Endothelial cell of umbilical vein (primary cell): ENCODE measurements at regions of chr14 and their contacts with region 1.

Region 1: DNA sequence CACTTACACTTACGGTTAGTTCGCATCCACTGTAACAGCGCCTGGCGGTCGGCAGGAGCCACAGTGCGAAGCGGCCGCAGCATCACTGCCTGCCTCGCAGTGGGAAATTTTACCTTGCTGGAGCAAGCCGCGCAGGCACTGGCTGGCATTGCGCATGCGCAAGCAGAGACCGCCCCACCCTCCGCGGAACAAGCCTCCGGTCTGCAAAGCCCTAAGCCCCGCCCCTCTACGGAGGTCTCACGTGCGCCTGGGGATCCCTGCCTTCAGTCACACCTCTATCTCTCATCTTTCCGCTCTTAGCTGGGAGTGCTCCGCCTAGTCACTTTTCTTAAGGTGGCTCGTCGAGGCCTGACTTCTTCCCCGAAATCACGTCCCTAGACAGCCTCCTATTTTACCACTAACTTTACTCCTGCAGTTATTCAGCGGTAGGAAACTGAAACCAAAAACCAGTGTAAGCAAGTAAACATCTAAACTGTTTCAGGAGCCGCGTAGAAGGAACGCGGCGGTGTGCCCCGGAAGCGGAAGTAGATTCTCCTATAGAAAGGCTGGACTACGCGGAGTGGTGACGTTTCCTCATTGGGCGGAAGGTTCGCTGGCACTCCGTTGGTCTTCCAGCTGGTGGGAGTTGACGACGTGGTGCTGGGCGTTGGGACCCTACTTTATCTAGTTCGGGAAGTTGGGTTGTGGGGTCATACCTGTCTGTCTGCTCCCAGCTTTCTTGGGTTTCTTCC is at the start of gene SRP54:
- DNase-seq: peak; percentile 98
- H3K4me3 ChIP-seq: peak within 1 kb of the TSS; percentile 71 to 91 (median 85)
- H3K27ac ChIP-seq: peak within 1 kb of the TSS; percentile 94
- H3K4me1 ChIP-seq: peaks cover 15% of the 10 kb centered on the region
- H3K27me3 ChIP-seq: no peaks in the 10 kb centered on the region
- CTCF ChIP-seq: peak in 1 of 2 donors; percentile 50
- POLR2A ChIP-seq: peak; percentile 91
- total RNA-seq, gene SRP54: 60.7 and 63.7 TPM in 2 replicates

Region 2: GRCh38 chr14:34184126-34184525 is 798.5 kb before region 1 on chr14:
- CTCF ChIA-PET with region 1: no interaction called
- POLR2A ChIA-PET with region 1: no interaction called
- dilution Hi-C with region 1: no loop called
- intact Hi-C with region 1: no loop called
- DNase-seq: no peak
- H3K4me3 ChIP-seq: no peak overlapping the region
- H3K27ac ChIP-seq: no peak overlapping the region
- H3K4me1 ChIP-seq: no peaks in the 10 kb centered on the region
- H3K27me3 ChIP-seq: no peaks in the 10 kb centered on the region
- CTCF ChIP-seq: no peak
- POLR2A ChIP-seq: no peak

Region 3: GRCh38 chr14:34671716-34672115 is 310.9 kb before region 1 on chr14:
- CTCF ChIA-PET with region 1: interaction called, 4 read pairs
- POLR2A ChIA-PET with region 1: interaction called, 5 read pairs
- dilution Hi-C with region 1: no loop called
- intact Hi-C with region 1: loop called (anchors 5 kb)
- DNase-seq: no peak
- H3K4me3 ChIP-seq: no peak overlapping the region
- H3K27ac ChIP-seq: no peak overlapping the region
- H3K4me1 ChIP-seq: peaks cover under 1% of the 10 kb centered on the region
- H3K27me3 ChIP-seq: no peaks in the 10 kb centered on the region
- CTCF ChIP-seq: no peak
- POLR2A ChIP-seq: no peak

Region 4: GRCh38 chr14:34781242-34781641 is 201.3 kb before region 1 on chr14:
- CTCF ChIA-PET with region 1: no interaction called
- POLR2A ChIA-PET with region 1: no interaction called
- dilution Hi-C with region 1: no loop called
- intact Hi-C with region 1: loop called (anchors 2 kb)
- DNase-seq: peak; percentile 95
- H3K4me3 ChIP-seq: peak overlapping the region in 1 of 3 experiments; percentile 40
- H3K27ac ChIP-seq: peak overlapping the region; percentile 95
- H3K4me1 ChIP-seq: peaks cover 22% of the 10 kb centered on the region
- H3K27me3 ChIP-seq: no peaks in the 10 kb centered on the region
- CTCF ChIP-seq: no peak
- POLR2A ChIP-seq: peak; percentile 34

Region 5: DNA sequence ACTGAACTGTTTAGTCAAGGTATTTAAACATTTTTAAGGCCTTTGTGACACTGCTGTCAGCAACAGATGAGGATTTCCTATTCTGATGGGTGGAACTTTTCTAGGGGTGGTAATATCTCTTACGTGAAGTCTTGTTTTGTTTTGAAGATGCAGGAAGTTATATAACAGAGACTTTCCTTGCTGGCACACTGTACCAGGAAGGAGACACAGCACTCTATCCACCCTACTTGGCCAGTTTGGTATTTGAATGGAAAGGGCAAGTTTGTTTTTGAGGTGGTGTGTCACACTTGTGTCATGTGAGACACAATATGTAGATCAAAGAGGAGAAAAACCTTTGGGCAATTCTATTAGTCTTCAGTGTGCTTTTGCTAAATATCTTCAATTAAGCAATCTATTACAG is 51.4 kb before region 1 on chr14:
- CTCF ChIA-PET with region 1: no interaction called
- POLR2A ChIA-PET with region 1: interaction called, 10 read pairs
- dilution Hi-C with region 1: no loop called
- intact Hi-C with region 1: no loop called
- DNase-seq: peak; percentile 83
- H3K4me3 ChIP-seq: no peak overlapping the region
- H3K27ac ChIP-seq: peak overlapping the region; percentile 48
- H3K4me1 ChIP-seq: peaks cover 23% of the 10 kb centered on the region
- H3K27me3 ChIP-seq: no peaks in the 10 kb centered on the region
- CTCF ChIP-seq: no peak
- POLR2A ChIP-seq: no peak

Region 6: DNA sequence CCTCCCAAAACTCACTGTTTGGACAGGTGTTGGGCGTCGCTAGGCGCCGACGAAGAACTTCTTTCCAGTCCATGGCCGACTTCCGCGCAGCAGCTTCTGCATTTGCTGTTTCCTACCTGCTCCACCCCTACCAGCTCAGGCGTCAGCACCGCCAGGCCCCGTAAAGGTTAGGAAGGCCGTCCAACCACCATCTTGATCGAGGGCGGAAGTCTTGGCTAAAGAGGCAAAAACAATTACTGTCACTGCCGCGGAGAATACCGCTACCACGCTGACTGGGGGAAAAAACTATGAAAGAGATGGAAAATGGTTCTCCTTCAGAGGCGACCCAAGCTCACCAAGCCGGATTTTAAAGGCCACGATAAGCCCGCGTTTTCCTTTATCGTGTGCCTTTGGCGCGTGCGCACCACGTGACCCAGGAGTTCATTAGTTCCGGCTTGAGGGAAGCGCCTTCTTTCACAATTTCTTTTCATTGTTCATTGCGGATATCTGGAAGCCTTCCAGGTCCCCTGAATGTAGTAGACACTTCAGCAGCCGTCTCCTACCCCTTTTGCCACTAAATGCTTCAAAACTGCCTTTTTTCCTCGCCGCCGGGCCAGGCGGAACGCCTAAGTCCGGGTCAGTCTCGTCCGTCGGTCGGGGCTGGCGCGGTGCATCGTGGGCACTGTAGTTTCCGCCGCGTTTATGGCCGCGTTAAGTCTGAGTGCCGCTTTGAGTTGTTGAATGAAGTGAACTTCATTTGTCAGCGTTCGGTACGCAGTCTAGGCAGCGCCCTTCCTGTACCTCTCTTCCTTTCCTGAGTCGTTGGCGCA is 139.5 kb after region 1 on chr14 and contains the starts of genes PPP2R3C and PRORP:
- CTCF ChIA-PET with region 1: no interaction called
- POLR2A ChIA-PET with region 1: no interaction called
- dilution Hi-C with region 1: no loop called
- intact Hi-C with region 1: loop called (anchors 1 kb)
- DNase-seq: peak; percentile 95
- H3K4me3 ChIP-seq: peak within 1 kb of the TSS; percentile 81 to 96 (median 88)
- H3K27ac ChIP-seq: peak within 1 kb of the TSS; percentile 91
- H3K4me1 ChIP-seq: peaks cover 15% of the 10 kb centered on the region
- H3K27me3 ChIP-seq: no peaks in the 10 kb centered on the region
- CTCF ChIP-seq: no peak
- POLR2A ChIP-seq: no peak
- total RNA-seq, gene PPP2R3C: 40.6 and 46.0 TPM in 2 replicates
- total RNA-seq, gene PRORP: 36.3 and 36.9 TPM in 2 replicates